ENCODE measurements at regions of chr11 and their contacts with region 1.

Region 1: GRCh38 chr11:57530596-57531507 is at the start of gene TIMM10:
- DNase-seq: peak; percentile 97
- ATAC-seq: peak; percentile 96
- H3K4me3 Mint-ChIP-seq: peak within 1 kb of the TSS; percentile 82
- H3K27ac Mint-ChIP-seq: peak within 1 kb of the TSS; percentile 83
- H3K4me1 Mint-ChIP-seq: peaks cover 35% of the 10 kb centered on the region
- H3K27me3 Mint-ChIP-seq: no peaks in the 10 kb centered on the region
- CTCF ChIP-seq: no peak
- total RNA-seq, gene TIMM10: 75.2 to 84.2 TPM

Region 2: DNA sequence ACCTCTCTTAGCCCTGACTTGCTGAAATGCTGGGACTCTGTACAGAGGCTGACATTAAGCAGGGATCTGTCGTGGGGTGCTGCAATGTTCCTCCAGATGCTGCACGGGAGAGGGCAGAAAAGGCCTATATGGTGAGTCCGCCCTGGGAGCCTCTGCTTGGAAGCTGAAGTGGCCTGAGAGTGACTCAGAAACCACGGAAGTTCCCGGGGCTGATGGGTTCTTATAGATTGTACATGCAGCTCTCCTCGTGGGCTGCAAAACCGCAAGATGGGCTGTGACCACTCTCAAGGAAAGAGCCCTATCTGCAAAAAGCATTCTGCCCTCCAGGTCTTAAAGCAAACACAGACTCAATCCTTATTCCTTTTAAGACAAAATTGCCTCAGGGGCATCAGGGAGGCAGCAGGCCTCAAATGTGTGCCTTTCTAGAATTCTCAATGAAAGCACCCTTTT is 98.1 kb before region 1 on chr11:
- CTCF ChIA-PET with region 1: interaction called, 10 read pairs
- POLR2A ChIA-PET with region 1: interaction called, 6 read pairs
- intact Hi-C with region 1: no loop called
- DNase-seq: peak; percentile 71
- ATAC-seq: peak; percentile 68
- H3K4me3 Mint-ChIP-seq: no peak overlapping the region
- H3K27ac Mint-ChIP-seq: no peak overlapping the region
- H3K4me1 Mint-ChIP-seq: peaks cover 10% of the 10 kb centered on the region
- H3K27me3 Mint-ChIP-seq: no peaks in the 10 kb centered on the region
- CTCF ChIP-seq: no peak

Region 3: DNA sequence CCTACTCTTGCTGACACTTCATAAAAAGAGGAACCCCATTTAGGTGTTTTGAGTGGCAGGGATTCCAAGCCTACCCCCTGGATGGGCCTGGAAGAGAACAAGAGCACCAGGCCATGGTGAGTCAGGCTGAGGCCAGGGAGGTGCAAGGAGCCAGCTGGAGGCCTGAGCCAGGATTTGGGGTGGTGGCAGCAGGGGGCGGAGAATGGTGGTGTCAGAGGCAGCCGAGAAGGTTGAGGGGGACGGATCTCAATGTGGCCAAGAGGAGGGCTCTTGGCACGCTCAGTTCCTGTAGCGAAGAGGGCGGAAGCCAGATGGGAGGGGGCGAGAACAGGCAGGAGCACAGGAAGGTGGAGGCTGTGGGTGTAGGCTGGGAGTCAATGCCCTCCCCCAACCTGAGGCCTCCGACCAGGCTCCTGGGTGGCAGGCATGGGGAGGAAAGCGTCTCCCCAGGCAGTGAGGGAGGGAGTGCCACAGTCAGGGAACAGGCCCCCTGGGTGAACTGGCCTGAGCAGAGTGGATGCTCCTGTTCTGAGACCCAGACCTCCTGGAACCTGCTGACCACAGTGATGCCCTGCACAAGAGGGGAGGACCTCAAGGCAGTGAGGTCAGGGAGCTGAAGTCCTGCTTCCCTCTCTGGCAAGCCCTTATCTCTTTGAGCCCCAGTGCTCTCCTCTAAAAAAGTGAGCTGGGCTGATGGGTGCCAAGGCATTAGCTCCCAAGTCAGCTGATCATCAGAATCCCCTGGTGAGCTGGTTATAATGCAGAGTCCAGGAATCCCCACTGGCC is 56.6 kb before region 1 on chr11:
- CTCF ChIA-PET with region 1: interaction called, 30 read pairs
- POLR2A ChIA-PET with region 1: interaction called, 4 read pairs
- intact Hi-C with region 1: no loop called
- DNase-seq: peak; percentile 82
- ATAC-seq: peak; percentile 83
- H3K4me3 Mint-ChIP-seq: peak overlapping the region; percentile 40
- H3K27ac Mint-ChIP-seq: peak overlapping the region; percentile 77
- H3K4me1 Mint-ChIP-seq: peaks cover 28% of the 10 kb centered on the region
- H3K27me3 Mint-ChIP-seq: peaks cover 5% of the 10 kb centered on the region
- CTCF ChIP-seq: no peak

Region 4: DNA sequence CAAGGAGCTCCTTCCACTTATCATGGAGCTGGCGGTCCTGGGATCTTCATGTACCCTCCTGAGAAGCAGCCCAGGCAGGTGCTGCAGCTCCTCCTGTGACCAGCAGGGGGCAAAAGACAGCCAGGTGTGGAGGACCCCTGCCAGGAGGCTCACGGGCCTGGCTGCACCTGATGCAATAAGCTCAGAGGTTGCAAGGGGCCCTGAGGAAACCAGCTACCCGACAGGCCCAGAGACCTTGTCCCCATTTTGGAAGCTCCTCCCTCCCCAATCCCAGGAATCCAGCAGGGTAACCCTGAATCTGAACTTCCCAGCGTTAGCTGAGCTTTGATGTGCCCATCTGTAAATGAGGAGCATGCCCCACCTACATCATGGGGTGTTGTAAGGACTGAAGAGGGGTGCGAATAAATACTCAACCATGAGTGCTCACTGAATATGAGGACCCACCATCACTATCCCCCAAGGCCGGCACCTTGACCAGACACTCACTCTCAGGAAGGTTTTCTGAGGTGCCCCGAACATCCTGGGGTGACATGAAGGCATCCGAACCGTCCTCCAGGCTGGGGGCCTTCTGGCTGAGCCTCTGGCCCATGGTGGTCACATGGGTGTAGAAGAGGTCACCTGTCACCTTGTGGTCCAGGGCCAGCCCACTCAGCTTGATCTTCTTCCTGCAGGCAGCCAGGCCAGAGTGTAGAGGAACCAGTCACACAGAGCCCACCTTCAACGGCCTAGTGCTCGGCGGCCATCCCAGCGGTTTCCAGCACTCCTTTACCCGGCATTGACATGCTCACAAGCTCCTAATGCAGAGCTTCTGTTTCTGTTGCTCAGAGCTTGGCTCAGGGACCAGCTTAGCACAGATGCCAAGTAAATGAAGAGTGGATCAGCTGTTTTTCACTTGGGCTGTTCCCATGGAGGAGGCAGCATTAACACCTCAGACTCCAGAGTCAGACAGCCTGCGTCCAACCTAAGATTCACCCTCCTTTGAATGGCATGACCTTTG is 37.0 kb before region 1 on chr11:
- CTCF ChIA-PET with region 1: interaction called, 425 read pairs
- POLR2A ChIA-PET with region 1: interaction called, 10 read pairs
- intact Hi-C with region 1: loop called (anchors 2 kb)
- DNase-seq: peak; percentile 88
- ATAC-seq: peak; percentile 90
- H3K4me3 Mint-ChIP-seq: no peak overlapping the region
- H3K27ac Mint-ChIP-seq: peak overlapping the region; percentile 96
- H3K4me1 Mint-ChIP-seq: peaks cover 13% of the 10 kb centered on the region
- H3K27me3 Mint-ChIP-seq: no peaks in the 10 kb centered on the region
- CTCF ChIP-seq: peak; percentile 90

Region 5: DNA sequence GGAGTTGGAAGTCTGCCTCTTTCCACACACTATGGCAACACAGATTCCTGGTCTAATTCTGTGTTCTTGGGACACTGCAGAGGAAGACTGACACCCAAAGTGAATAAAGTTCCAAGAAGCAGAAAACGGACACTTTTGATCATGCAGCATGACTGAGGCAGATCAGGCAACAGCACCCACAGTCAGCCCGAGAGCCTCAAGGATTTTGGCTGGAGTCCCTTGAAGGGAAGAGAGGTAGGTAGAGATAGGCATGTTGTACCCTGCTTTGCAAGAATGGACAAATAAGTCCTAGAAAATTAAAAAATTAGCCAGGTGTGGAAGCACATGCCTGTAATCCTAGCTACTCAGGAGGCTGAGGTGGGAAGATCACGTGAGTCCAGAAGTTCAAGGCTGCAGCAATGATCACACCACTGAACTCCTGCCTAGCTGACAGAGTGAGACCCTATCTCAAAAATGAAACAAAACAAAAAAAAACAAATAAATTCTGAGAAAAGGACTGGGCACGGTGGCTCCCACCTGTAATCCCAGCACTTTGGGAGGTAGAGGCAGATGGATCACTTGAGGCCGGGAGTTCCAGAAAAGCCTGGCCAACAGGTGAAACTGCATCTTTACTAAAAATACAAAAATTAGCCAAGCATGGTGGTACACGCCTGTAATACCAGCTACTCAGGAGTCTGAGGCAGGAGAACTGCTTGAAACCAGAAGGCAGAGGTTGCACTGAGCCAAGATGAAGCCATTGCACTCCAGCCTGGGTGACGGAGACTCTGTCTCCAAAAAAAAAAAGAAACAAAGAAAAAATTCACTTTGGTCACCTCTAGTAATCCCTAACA is 22.3 kb before region 1 on chr11:
- CTCF ChIA-PET with region 1: interaction called, 170 read pairs
- POLR2A ChIA-PET with region 1: interaction called, 57 read pairs
- intact Hi-C with region 1: no loop called
- DNase-seq: no peak
- ATAC-seq: no peak
- H3K4me3 Mint-ChIP-seq: no peak overlapping the region
- H3K27ac Mint-ChIP-seq: no peak overlapping the region
- H3K4me1 Mint-ChIP-seq: peaks cover 25% of the 10 kb centered on the region
- H3K27me3 Mint-ChIP-seq: no peaks in the 10 kb centered on the region
- CTCF ChIP-seq: no peak

Region 6: GRCh38 chr11:57644748-57645688 is 114.2 kb after region 1 on chr11:
- CTCF ChIA-PET with region 1: interaction called, 28 read pairs
- POLR2A ChIA-PET with region 1: interaction called, 3 read pairs
- intact Hi-C with region 1: no loop called
- DNase-seq: peak; percentile 93
- ATAC-seq: peak; percentile 71
- H3K4me3 Mint-ChIP-seq: no peak overlapping the region
- H3K27ac Mint-ChIP-seq: no peak overlapping the region
- H3K4me1 Mint-ChIP-seq: peaks cover 36% of the 10 kb centered on the region
- H3K27me3 Mint-ChIP-seq: peaks cover 48% of the 10 kb centered on the region
- CTCF ChIP-seq: peak; percentile 78